Astrocyte of the cerebellum (primary cell): ENCODE measurements at regions of chr7 and their contacts with region 1.

Region 1: DNA sequence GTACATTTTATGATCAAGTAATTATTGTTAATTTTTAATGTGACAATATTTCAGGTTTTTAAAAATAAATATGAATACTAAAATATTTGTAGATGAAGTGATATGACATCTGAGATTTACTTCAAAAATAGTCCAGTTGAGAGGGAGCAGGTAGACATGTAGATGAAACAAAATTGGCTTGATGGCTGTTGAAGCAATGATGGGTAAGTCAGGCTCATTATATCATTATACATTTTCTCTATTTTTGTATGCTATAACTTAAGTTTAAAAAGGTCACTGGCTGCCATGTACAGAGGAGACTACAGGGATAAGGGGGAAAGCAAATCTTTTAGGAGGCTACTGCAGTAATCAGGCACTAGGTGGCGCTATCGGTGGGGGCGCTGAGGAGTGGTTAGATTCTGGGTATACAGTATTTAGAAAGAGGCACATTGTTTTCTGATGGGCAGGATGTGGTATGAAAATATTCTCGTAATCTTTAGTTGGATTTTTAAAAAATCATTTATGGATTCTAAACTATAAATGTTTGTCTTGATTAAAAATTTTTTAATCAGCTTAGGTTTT is 189.8 kb upstream of the IMMP2L start:
- DNase-seq: no peak
- H3K4me3 ChIP-seq: no peak overlapping the region
- CTCF ChIP-seq: peak; percentile 94

Region 2: GRCh38 chr7:111678281-111678680 is 73.8 kb before region 1 on chr7:
- in situ Hi-C with region 1: no loop called
- DNase-seq: no peak
- H3K4me3 ChIP-seq: no peak overlapping the region
- CTCF ChIP-seq: no peak

Region 3: DNA sequence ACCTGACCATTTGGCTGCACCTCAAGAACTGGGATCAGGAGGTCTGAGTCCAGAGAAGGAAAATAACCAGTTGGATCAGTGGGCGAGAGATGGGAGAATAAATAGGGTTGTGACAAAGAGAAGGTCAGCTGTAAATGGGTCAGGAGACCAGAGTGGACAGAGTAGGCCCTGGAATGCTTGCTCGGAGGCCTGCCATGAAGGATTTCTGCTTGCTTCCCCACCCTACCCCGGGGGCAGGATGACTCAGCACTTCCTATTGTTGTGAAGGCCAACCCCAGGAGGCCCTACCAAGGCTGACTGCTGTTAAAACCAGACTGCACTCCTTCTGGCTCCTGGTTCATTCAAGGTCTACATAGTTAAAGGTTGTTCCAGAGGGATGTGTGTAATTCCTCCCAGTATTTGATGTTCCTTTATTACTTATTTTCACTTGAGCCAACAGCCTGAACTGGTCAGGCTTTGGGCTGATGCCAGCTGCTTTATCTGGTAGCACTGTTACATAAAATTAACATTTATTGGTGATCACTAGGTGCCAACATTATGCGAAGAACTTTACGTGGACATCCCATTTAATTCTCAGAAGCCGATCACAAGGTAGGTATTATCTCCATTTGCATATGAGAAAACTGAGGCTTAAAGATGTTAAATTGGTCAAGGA is 670.9 kb after region 1 on chr7:
- in situ Hi-C with region 1: loop called (anchors 25 kb)
- DNase-seq: peak; percentile 91
- H3K4me3 ChIP-seq: no peak overlapping the region
- CTCF ChIP-seq: no peak